Calu3 (cell line): ENCODE measurements at regions of chr7 and their contacts with region 1.

Region 1: GRCh38 chr7:28096713-28097112 is 83.9 kb downstream of the JAZF1 start:
- DNase-seq: peak; percentile 68
- H3K4me3 Mint-ChIP-seq: no peak overlapping the region
- H3K27ac Mint-ChIP-seq: no peak overlapping the region
- H3K4me1 Mint-ChIP-seq: no peaks in the 10 kb centered on the region
- H3K27me3 Mint-ChIP-seq: no peaks in the 10 kb centered on the region
- CTCF ChIP-seq: peak; percentile 87

Region 2: DNA sequence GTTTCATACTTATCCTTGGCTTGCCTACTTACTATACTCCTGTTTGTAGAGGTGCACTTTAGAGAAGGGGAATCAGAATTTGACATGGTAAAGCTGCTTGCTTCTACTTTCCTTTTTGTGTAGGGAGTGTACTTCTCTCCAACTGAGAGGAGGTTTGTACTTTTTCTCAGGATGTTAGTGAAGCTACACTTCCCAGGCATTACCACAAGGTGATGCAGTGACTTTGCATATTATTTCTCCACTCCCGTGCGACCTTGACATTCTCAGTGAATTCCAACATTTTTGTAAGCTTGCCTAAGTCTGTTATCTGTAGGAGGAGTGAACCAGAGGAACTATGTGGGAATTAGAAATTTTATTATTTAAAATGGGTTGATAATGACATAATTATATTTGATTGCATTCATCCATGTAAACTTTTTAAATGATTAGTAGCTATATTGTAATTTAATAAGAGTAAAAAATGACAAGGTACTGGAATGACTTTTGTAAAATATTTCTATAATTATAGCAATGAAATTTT is 351.6 kb before region 1 on chr7:
- CTCF ChIA-PET with region 1: no interaction called
- intact Hi-C with region 1: loop called (anchors 1 kb)
- DNase-seq: peak; percentile 46
- H3K4me3 Mint-ChIP-seq: peak overlapping the region; percentile 46
- H3K27ac Mint-ChIP-seq: peak overlapping the region; percentile 74
- H3K4me1 Mint-ChIP-seq: peaks cover 52% of the 10 kb centered on the region
- H3K27me3 Mint-ChIP-seq: no peaks in the 10 kb centered on the region
- CTCF ChIP-seq: peak; percentile 66

Region 3: DNA sequence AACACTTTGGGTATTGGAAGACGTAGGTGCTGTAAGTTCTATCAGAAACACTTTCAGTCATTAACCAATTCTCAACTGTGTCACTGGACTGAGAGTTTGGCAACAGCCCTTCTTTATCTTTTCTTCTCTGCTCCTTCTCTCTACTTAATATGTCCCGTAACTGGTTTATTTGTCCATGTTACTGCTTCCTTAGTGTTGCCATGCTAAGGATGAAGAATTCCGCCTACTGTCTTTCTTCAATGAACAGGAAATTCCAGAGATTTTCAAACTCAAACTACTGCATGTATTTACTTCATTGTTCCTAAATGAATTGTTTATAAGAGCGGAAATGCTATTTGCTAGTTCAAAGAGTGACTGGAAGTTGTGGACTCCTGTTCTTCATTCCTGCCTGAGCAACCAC is 213.0 kb before region 1 on chr7:
- CTCF ChIA-PET with region 1: no interaction called
- intact Hi-C with region 1: no loop called
- DNase-seq: no peak
- H3K4me3 Mint-ChIP-seq: no peak overlapping the region
- H3K27ac Mint-ChIP-seq: no peak overlapping the region
- H3K4me1 Mint-ChIP-seq: no peaks in the 10 kb centered on the region
- H3K27me3 Mint-ChIP-seq: no peaks in the 10 kb centered on the region
- CTCF ChIP-seq: no peak

Region 4: DNA sequence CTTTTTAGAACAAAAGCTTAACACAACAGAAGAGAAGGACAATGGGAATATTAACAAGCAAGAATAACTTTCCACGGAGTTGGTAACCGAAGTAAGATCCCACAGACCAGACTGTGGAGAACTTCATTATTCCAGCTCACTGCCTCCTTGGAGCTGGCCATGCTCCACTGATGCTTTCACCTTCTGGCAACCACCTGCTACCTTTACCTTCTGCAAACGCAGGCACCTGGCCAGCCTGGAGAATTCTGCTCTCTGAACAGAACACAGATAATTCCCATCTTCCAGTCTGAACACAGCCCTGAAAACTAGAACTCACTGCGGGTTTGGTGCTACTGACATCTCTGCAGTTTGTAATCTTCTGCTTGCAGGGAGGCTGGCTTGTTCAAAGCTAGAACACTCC is 17.3 kb after region 1 on chr7:
- CTCF ChIA-PET with region 1: interaction called, 10 read pairs
- intact Hi-C with region 1: no loop called
- DNase-seq: no peak
- H3K4me3 Mint-ChIP-seq: no peak overlapping the region
- H3K27ac Mint-ChIP-seq: no peak overlapping the region
- H3K4me1 Mint-ChIP-seq: peaks cover 1% of the 10 kb centered on the region
- H3K27me3 Mint-ChIP-seq: no peaks in the 10 kb centered on the region
- CTCF ChIP-seq: no peak

Region 5: DNA sequence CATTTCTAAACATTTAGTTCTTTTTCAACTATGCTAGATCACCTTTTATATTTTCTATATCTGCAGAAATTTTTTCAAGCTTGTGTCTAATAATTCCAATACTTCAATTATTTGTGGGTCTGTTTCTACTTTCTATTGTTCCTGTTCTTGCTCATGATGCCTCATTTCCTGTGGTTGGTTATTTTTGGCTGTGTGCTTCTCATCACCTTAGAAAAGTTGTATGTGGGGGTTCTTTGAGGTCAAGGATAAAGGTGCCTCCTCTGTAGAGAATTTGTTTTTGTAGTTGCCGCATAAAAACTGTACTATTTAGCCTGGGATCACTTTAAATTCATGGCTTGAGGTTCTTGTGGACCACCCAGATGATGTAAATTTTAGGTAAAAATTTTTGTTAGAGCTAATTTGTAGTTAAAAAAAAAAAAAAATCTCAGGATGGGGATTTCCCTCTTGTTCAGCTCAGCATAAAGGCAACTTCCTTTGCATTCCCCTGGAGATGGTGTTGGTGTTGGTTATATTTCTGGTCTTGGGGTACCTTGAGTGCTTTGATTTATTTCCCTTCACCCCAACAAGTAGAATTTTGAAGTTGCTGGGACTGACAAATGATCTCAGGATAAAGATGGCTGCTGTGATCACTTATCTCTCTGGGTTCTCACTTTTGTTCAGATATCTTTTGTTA is 110.9 kb after region 1 on chr7:
- CTCF ChIA-PET with region 1: no interaction called
- intact Hi-C with region 1: no loop called
- DNase-seq: no peak
- H3K4me3 Mint-ChIP-seq: no peak overlapping the region
- H3K27ac Mint-ChIP-seq: no peak overlapping the region
- H3K4me1 Mint-ChIP-seq: peaks cover 12% of the 10 kb centered on the region
- H3K27me3 Mint-ChIP-seq: no peaks in the 10 kb centered on the region
- CTCF ChIP-seq: no peak